ENCODE measurements at regions of chr20 and their contacts with region 1.

Region 1: DNA sequence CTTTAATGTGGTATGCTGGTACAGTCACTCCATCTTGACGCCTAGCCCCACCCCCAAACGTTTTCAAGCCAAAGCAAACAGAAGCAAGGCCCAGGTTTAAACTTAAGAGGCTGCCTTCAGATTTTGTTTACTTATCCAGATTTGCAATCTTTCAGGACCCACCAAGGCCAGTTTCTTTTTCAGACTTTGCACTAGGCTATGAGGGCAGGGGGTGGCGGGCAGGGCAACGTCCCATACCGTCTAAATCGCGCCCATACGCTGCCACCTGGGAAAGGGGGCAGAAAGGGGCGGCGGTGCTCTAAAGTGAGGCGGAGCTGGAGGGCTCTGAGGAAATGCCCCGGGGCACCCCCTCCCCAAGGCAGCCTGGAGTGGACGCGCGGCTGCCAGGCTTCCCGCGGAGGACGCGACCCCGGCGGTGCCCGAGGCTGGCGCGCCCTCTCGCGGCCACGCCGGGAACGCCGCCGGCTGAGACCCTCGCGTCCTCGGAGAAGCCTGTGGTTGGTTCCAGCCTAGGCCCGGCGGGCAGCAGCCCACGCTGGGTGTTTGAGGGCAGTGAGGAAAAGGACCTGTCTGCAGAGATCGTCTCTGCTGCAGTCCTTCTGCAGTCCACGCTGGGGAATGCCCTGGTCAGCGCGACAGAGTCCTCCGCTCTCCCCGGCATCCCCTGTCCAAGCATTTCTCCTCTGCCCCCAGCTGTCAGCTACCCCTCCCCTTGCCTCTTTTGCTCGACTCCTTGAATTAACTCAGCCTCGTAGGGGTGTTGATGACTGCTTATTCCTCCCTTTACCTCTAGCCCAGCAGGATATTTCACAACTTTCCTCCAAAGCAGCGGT is 129.2 kb upstream of the PRND start:
- DNase-seq: peak; percentile 51
- ATAC-seq: peak; percentile 89 to 94

Region 2: GRCh38 chr20:4108495-4109306 is 483.8 kb before region 1 on chr20:
- intact Hi-C with region 1: loop called (anchors 5 kb)
- DNase-seq: peak; percentile 59
- ATAC-seq: peak; percentile 84 to 89

Measured in left cardiac atrium (tissue), 4 donors.